ENCODE measurements at regions of chr3 and their contacts with region 1.

Region 1: GRCh38 chr3:14508961-14509795 is 31.0 kb downstream of the GRIP2 start:
- DNase-seq: peak; percentile 79
- ATAC-seq: peak; percentile 67 to 78

Region 2: DNA sequence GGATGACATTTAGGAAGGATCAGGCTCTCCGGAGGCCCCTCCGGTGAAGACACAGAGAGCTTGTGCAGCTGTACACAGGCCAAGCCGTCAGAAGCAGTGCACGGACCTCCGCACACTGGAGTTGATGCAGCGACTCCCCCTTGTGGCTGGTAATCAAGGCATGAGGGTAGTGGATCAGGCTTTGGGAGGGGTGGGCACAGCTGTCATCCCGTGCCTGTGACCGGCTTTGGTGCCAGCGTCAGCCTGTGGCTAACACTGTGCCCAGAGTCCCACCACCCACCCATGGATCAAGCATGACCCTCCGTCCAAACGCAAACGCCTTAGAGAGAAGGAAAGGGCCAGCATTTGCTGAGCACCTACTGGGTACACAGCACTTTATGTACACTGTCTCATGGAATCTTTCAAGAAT is 39.1 kb after region 1 on chr3:
- intact Hi-C with region 1: loop called (anchors 1 to 5 kb)
- DNase-seq: peak; percentile 82
- ATAC-seq: peak; percentile 83 to 87

Region 3: GRCh38 chr3:14626881-14627411 is 117.8 kb after region 1 on chr3:
- intact Hi-C with region 1: loop called in 1 of 2 experiments (anchors 10 kb)
- DNase-seq: no peak
- ATAC-seq: peak in 1 of 2 donors; percentile 75